ENCODE measurements at regions of chr1 and their contacts with region 1.

Region 1: GRCh38 chr1:36099681-36100341 is 11.1 kb downstream of the ADPRS start:
- DNase-seq: peak; percentile 90
- ATAC-seq: peak; percentile 88
- H3K4me3 ChIP-seq: no peak overlapping the region
- H3K27ac ChIP-seq: no peak overlapping the region
- H3K4me1 ChIP-seq: peaks cover 14% of the 10 kb centered on the region
- H3K27me3 ChIP-seq: no peaks in the 10 kb centered on the region
- CTCF ChIP-seq: peak; percentile 82

Region 2: GRCh38 chr1:36187800-36188593 is 88.2 kb after region 1 on chr1:
- intact Hi-C with region 1: loop called (anchors 5 kb)
- DNase-seq: peak; percentile 87
- ATAC-seq: peak; percentile 98
- H3K4me3 ChIP-seq: no peak overlapping the region
- H3K27ac ChIP-seq: peak overlapping the region; percentile 82
- H3K4me1 ChIP-seq: peaks cover 12% of the 10 kb centered on the region
- H3K27me3 ChIP-seq: no peaks in the 10 kb centered on the region
- CTCF ChIP-seq: peak; percentile 89

Measured in upper lobe of right lung (tissue), 1 donor.